CD8-positive, alpha-beta memory T cell (primary cell): ENCODE measurements at regions of chr21 and their contacts with region 1.

Region 1: DNA sequence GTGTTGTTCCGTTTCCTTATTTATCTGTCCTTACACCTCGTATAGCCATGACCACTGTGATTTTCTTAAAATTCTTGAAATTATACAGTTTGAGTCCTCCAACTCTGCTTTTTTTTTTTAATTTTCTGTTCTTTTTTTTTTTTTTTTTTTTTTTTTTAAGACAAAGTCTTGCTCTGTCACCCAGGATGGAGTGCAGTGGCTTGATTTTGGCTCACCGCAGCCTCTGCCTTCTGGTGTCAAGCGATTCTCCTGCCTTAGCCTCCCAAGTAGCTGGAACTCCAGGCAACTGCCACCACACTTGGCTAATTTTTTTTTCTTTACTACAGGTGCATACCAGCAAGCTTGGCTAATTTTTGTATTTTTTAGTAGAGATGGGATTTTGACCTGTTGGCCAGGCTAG is 48.9 kb downstream of the DIP2A start:
- DNase-seq: no peak
- H3K4me3 ChIP-seq: no peak overlapping the region
- H3K4me3 Mint-ChIP-seq: no peak overlapping the region
- H3K27ac ChIP-seq: no peak overlapping the region
- H3K27ac Mint-ChIP-seq: peak overlapping the region in 2 of 8 donors; percentile 26 to 32
- H3K4me1 ChIP-seq: no peaks in the 10 kb centered on the region
- H3K4me1 Mint-ChIP-seq: peaks cover 18 to 31% (median 21%) of the 10 kb centered on the region in 3 donors
- H3K27me3 ChIP-seq: no peaks in the 10 kb centered on the region
- H3K27me3 Mint-ChIP-seq: no peaks in the 10 kb centered on the region

Region 2: GRCh38 chr21:45576838-45577737 is 930.5 kb before region 1 on chr21:
- CTCF ChIA-PET with region 1: no interaction called
- POLR2A ChIA-PET with region 1: interaction called, 12 read pairs
- DNase-seq: peak in 1 of 5 donors; percentile 37
- H3K4me3 ChIP-seq: no peak overlapping the region
- H3K4me3 Mint-ChIP-seq: no peak overlapping the region
- H3K27ac ChIP-seq: no peak overlapping the region
- H3K27ac Mint-ChIP-seq: peak overlapping the region in 1 of 8 donors; percentile 75
- H3K4me1 ChIP-seq: no peaks in the 10 kb centered on the region
- H3K4me1 Mint-ChIP-seq: peaks cover 0 to 5% (median 3%) of the 10 kb centered on the region in 3 donors
- H3K27me3 ChIP-seq: no peaks in the 10 kb centered on the region
- H3K27me3 Mint-ChIP-seq: peaks cover 2 to 6% of the 10 kb centered on the region in 2 donors